Thyroid gland (tissue), 4 donors: ENCODE measurements at regions of chr11 and their contacts with region 1.

Region 1: DNA sequence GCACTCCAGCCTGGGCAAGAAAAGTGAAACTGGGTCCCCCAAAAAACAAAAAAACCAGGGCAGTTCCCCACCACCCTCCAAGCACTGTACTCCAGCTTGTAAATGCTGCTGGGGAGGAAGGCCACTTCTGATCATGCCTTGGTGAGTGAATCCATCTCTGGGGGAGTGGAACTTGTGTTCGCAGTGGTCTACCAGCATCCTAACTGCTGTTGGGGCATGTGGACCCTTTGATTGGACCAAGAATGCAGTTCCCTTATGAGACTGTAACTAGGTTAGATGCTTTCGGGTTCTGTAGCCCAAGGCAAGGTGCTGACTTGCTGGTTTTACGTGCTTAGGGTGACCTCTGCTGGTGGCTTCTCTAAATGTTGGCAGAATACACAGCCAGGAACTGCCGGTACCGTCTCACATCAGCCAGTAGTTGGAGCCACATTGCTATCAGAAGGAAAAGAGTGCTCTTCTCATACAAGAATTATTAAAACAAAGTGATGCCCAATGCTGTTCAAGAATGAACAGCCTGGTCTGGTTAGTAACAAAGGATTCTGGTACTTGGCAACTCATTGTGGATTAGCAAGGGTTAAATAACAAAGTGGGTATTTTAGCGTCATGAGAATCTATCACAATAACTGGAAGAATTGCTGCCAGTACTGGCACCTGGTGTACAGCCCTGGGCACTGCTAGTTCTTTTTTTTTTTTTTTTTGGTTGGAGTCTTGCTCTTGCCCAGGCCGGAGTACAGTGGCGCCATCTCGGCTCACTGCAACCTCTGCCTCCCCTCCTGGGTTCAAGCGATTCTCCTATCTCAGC is 13.0 kb downstream of the EIF1AD start:
- DNase-seq: peak; percentile 92 to 93
- H3K4me3 ChIP-seq: no peak overlapping the region
- H3K27ac ChIP-seq: no peak overlapping the region
- H3K4me1 ChIP-seq: no peaks in the 10 kb centered on the region
- H3K27me3 ChIP-seq: no peaks in the 10 kb centered on the region
- CTCF ChIP-seq: peak; percentile 72 to 100 (median 96)
- POLR2A ChIP-seq: no peak

Region 2: GRCh38 chr11:65711785-65712632 is 277.0 kb before region 1 on chr11 and contains the start of gene KAT5:
- intact Hi-C with region 1: loop called (anchors 10 kb)
- DNase-seq: peak; percentile 99
- H3K4me3 ChIP-seq: peak within 1 kb of the TSS; percentile 36 to 81 (median 65)
- H3K27ac ChIP-seq: peak within 1 kb of the TSS; percentile 97 to 100 (median 99)
- H3K4me1 ChIP-seq: peaks cover 6 to 9% of the 10 kb centered on the region in 2 donors
- H3K27me3 ChIP-seq: no peaks in the 10 kb centered on the region
- CTCF ChIP-seq: peak; percentile 95 to 100 (median 98)
- POLR2A ChIP-seq: peak; percentile 68 to 89
- total RNA-seq, gene KAT5: 78.5 to 114 (median 81.1) TPM

Region 3: DNA sequence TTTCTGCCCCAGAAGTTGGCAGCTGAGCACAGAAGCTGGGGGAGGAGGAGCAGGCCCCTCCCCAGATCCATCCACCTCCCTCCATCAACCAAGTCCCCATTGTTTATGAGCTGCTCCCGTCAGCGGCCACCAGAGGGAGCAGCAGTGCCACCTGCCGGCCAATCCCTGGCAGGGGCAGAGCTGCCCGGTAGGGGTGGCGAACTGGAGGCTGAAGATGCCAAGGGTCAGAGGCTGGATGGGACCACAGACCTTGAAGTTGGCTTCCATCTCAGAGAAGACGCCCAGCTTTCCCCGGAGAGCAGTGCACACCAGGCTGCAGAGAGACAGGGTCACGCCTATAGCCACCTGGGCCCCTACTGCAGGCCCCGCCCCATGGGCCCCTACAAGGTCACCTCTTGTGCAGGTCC is 104.3 kb before region 1 on chr11:
- intact Hi-C with region 1: loop called (anchors 2 kb)
- DNase-seq: peak; percentile 74 to 79
- H3K4me3 ChIP-seq: no peak overlapping the region
- H3K27ac ChIP-seq: no peak overlapping the region
- H3K4me1 ChIP-seq: peaks cover 19 to 20% of the 10 kb centered on the region in 2 donors
- H3K27me3 ChIP-seq: no peaks in the 10 kb centered on the region
- CTCF ChIP-seq: peak; percentile 93 to 99 (median 98)
- POLR2A ChIP-seq: no peak